GM10248 (cell line): ENCODE measurements at regions of chr21 and their contacts with region 1.

Region 1: GRCh38 chr21:42449296-42449927 is 45.7 kb downstream of the UBASH3A start:
- DNase-seq: no peak
- CTCF ChIP-seq: no peak

Region 2: GRCh38 chr21:42337830-42338728 is 111.3 kb before region 1 on chr21:
- CTCF ChIA-PET with region 1: interaction called, 12 read pairs
- POLR2A ChIA-PET with region 1: no interaction called
- DNase-seq: peak; percentile 67
- CTCF ChIP-seq: peak; percentile 59

Region 3: GRCh38 chr21:42537106-42537742 is 87.8 kb after region 1 on chr21:
- CTCF ChIA-PET with region 1: interaction called, 10 read pairs
- POLR2A ChIA-PET with region 1: no interaction called
- DNase-seq: no peak
- CTCF ChIP-seq: peak; percentile 55